ENCODE measurements at regions of chr4 and their contacts with region 1.

Region 1: DNA sequence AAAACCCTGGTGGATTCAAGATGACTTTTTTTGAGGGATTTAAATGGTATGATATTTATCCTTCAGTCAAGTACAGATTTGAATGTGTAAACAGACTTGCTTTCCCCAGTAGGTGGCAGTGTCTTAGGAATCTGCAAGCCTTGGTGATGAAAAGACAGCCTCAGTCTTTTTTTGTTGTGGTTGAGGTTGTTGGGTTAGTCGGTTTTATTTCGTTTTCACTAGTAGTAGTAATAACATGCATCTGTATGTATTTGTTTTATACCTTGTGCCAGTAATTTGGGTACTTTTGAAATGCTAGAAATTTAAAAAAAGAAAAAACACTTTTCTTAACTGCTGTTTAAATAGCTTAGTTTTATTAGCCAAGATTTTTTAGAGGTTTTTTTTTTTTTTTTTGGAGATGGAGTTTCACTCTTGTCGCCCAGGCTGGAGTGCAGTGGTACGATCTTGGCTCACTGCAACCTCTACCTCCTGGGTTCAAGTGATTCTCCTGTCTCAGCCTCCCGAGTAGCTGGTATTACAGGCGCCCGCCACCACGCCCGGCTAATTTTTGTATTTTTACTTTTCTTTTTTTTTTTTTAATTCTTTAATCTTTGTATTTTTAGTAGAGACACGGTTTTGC is 39.2 kb downstream of the COPS4 start:
- DNase-seq: peak; percentile 79
- ATAC-seq: peak; percentile 95
- H3K4me3 ChIP-seq: no peak overlapping the region
- H3K27ac ChIP-seq: peak overlapping the region; percentile 7; the same call in 1 of the 2 replicates
- H3K4me1 ChIP-seq: peaks cover 8% of the 10 kb centered on the region
- H3K27me3 ChIP-seq: no peaks in the 10 kb centered on the region
- CTCF ChIP-seq: peak; percentile 74 to 78 (median 77)
- EP300 ChIP-seq: 0 out of 4 replicates have a peak, but pooled peaks of 1 of the 2 experiments have one; percentile 31
- POLR2A ChIP-seq: no peak
- RAD21 ChIP-seq: peak; percentile 92

Region 2: DNA sequence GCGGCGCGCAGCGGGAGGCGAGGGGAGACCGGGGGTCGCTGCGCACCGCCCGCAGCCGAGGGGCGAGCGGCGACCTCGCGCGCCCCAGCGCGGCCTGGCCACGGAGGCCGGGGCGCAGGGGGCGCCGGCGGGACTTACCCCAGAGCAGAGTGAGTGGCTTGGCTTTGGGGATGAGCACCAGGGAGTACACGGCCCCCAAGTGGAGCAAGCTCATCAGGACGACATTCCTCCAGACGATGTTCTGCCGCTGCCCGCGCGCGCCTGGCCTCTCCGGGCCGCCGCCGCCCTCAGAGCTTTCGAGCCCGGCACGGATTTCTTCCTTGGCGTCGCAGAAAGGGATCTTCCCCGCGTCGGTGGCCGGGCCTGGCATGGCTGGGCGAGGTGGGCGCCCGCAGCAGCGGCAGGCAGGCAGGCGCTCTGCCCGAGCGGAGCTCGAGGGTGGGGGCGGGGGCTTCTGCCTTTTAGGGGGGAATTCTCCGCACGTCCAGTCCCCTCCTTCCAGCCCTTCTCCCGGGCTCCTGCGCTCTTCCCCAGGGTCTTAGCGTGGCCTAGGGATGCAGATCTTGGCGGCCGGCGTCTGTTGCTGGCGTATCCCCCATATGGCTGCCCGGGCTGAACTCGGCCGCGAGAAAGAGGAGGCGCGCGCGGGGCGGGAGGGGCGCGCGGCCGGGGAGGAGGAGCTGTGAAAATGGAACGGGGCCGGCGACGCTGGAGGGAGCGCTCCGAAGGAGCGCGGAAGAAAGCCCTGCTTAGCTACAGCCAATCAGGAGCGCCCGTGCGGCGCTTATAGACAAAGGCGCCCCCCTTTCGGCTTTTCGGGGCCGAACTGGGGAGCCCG is 275.8 kb before region 1 on chr4 and contains the start of gene SCD5:
- CTCF ChIA-PET with region 1: no interaction called
- POLR2A ChIA-PET with region 1: no interaction called
- RAD21 ChIA-PET with region 1: no interaction called
- SMC1A ChIA-PET with region 1: no interaction called
- in situ Hi-C with region 1: no loop called
- intact Hi-C with region 1: no loop called
- DNase-seq: no peak
- ATAC-seq: peak; percentile 96
- H3K4me3 ChIP-seq: peak within 1 kb of the TSS; percentile 84
- H3K27ac ChIP-seq: no peak within 1 kb of the TSS; the same call in 1 of the 2 replicates
- H3K4me1 ChIP-seq: peaks cover 9% of the 10 kb centered on the region
- H3K27me3 ChIP-seq: no peaks in the 10 kb centered on the region
- CTCF ChIP-seq: no peak
- EP300 ChIP-seq: no peak
- POLR2A ChIP-seq: peak; percentile 64
- RAD21 ChIP-seq: no peak
- polyA plus RNA-seq, gene SCD5: 2.4 to 3.5 TPM

Region 3: GRCh38 chr4:83093130-83093529 is 18.9 kb after region 1 on chr4:
- CTCF ChIA-PET with region 1: interaction called, 14 read pairs
- POLR2A ChIA-PET with region 1: interaction called, 4 read pairs
- RAD21 ChIA-PET with region 1: interaction called, 5 read pairs
- SMC1A ChIA-PET with region 1: interaction called, 18 read pairs
- in situ Hi-C with region 1: no loop called
- intact Hi-C with region 1: no loop called
- DNase-seq: no peak
- ATAC-seq: no peak; the same call in 2 of the 3 replicates
- H3K4me3 ChIP-seq: no peak overlapping the region
- H3K27ac ChIP-seq: no peak overlapping the region
- H3K4me1 ChIP-seq: no peaks in the 10 kb centered on the region
- H3K27me3 ChIP-seq: no peaks in the 10 kb centered on the region
- CTCF ChIP-seq: no peak
- EP300 ChIP-seq: no peak
- POLR2A ChIP-seq: no peak
- RAD21 ChIP-seq: no peak

Region 4: DNA sequence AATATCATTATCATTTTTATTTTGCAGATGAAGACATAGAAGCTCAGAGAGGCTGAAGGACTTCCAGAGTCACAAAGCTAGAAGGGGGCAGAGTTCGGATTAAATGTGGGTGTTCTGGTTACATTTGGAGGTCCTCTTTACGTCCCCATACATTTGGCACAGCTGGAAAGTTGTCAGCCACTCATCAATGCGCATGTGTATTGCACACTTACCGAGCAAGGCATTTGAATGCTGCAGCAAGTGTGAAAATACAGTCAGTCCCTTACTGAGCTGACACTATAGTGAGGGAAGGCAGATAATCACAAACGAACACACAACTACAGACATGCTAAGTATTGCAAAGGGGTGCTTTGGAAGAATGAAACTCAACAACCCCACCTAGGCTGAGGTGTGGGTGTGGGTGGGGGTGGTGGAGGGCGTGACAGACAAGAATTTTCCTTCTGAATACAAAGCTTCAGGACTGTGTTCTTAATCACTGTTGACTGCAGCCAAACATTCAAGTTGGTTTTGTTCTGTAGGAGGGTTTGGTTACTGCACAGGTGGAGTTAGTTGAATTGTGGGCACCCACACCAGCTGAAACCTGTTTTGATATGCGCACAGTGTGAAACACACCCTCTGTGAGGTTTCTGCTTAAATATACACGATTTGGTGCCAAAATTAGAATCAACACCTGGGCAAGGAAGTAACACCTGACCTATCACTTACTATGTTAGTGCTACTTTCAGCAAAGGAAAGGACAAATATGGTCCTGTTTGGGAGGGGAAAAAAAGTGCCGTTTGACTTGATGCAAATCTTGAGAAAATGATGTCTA is 138.1 kb after region 1 on chr4:
- CTCF ChIA-PET with region 1: interaction called, 14 read pairs
- POLR2A ChIA-PET with region 1: interaction called, 6 read pairs
- RAD21 ChIA-PET with region 1: interaction called, 22 read pairs
- SMC1A ChIA-PET with region 1: interaction called, 13 read pairs
- in situ Hi-C with region 1: no loop called
- intact Hi-C with region 1: no loop called
- DNase-seq: peak; percentile 90
- ATAC-seq: peak; percentile 87
- H3K4me3 ChIP-seq: no peak overlapping the region
- H3K27ac ChIP-seq: peak overlapping the region; percentile 60
- H3K4me1 ChIP-seq: peaks cover 29% of the 10 kb centered on the region
- H3K27me3 ChIP-seq: no peaks in the 10 kb centered on the region
- CTCF ChIP-seq: no peak
- EP300 ChIP-seq: peak; percentile 70 to 88; a peak in 3 of 4 replicates
- POLR2A ChIP-seq: no peak
- RAD21 ChIP-seq: no peak

Region 5: GRCh38 chr4:83259586-83259985 is 185.4 kb after region 1 on chr4:
- CTCF ChIA-PET with region 1: interaction called, 54 read pairs
- POLR2A ChIA-PET with region 1: interaction called, 3 read pairs
- RAD21 ChIA-PET with region 1: interaction called, 51 read pairs
- SMC1A ChIA-PET with region 1: interaction called, 56 read pairs
- in situ Hi-C with region 1: loop called (anchors 10 kb)
- intact Hi-C with region 1: loop called (anchors 1 kb)
- DNase-seq: no peak
- ATAC-seq: peak; percentile 69
- H3K4me3 ChIP-seq: no peak overlapping the region
- H3K27ac ChIP-seq: peak overlapping the region; percentile 28
- H3K4me1 ChIP-seq: peaks cover 32% of the 10 kb centered on the region
- H3K27me3 ChIP-seq: no peaks in the 10 kb centered on the region
- CTCF ChIP-seq: no peak
- EP300 ChIP-seq: no peak
- POLR2A ChIP-seq: no peak
- RAD21 ChIP-seq: no peak

Region 6: GRCh38 chr4:83276299-83277040 is 202.3 kb after region 1 on chr4:
- CTCF ChIA-PET with region 1: interaction called, 147 read pairs
- POLR2A ChIA-PET with region 1: interaction called, 9 read pairs
- RAD21 ChIA-PET with region 1: interaction called, 70 read pairs
- SMC1A ChIA-PET with region 1: interaction called, 46 read pairs
- in situ Hi-C with region 1: no loop called
- intact Hi-C with region 1: no loop called
- DNase-seq: no peak
- ATAC-seq: peak; percentile 70
- H3K4me3 ChIP-seq: peak overlapping the region; percentile 26; the same call in 1 of the 2 replicates
- H3K27ac ChIP-seq: peak overlapping the region; percentile 78
- H3K4me1 ChIP-seq: peaks cover 44% of the 10 kb centered on the region
- H3K27me3 ChIP-seq: no peaks in the 10 kb centered on the region
- CTCF ChIP-seq: no peak
- EP300 ChIP-seq: peak in 1 of 2 experiments; percentile 70; a peak in 1 of 4 replicates
- POLR2A ChIP-seq: no peak
- RAD21 ChIP-seq: no peak

Measured in GM12878 (cell line).